ENCODE measurements at regions of chr7 and their contacts with region 1.

Region 1: DNA sequence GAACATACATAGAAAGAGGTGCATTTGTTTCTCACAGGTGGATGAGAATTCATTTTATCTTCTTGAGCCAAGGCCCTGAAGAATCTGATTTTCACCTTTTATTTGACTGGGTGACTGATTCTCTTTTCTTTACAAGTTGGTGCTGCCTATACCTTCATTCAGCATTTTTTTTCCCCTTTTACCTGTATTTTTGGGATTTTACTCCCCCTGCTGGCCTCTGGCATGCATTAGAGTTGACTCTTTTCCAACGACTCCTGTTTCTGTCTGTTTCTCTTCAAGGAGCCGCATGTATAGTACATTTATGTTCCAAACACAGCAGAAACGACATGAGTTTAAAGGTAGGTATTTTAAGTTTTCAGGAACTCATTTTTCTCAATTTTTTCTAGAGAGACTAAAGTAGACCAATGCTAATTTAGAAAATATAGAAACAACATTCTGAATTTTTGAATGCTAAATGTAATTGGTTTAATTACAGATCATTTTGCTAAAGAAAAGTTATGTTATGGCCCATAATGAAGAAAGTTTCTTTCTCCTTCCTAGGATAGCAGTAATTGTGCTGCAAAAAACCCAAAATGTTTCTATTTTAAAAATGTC is 149.8 kb upstream of the HDAC9 start:
- DNase-seq: peak; percentile 81
- ATAC-seq: peak; percentile 82
- H3K4me3 ChIP-seq: no peak overlapping the region
- H3K27ac ChIP-seq: no peak overlapping the region
- H3K4me1 ChIP-seq: no peaks in the 10 kb centered on the region
- H3K27me3 ChIP-seq: no peaks in the 10 kb centered on the region
- CTCF ChIP-seq: peak; percentile 91

Region 2: DNA sequence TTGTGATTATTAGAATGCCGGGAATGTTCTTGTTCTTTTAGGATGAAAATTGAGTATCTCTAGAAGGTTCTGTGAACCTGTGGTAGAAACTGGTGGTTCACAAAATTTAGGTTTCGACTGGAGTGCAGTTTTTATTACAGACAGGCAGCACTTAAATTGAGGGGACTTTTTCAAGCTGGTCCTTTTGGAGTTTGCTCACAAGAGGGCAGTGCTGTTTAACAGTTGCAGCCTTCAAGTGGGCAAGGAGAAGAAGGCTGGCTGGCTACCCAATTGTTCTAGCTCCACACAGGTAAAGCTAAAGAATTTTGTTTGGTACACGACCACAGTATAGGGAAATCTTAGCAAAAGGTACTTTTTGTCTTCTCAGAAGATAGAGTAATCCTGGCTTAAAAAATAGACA is 639.0 kb before region 1 on chr7:
- CTCF ChIA-PET with region 1: interaction called, 20 read pairs
- POLR2A ChIA-PET with region 1: no interaction called
- intact Hi-C with region 1: loop called (anchors 1 kb)
- DNase-seq: peak; percentile 77
- ATAC-seq: peak; percentile 97
- H3K4me3 ChIP-seq: no peak overlapping the region
- H3K27ac ChIP-seq: no peak overlapping the region
- H3K4me1 ChIP-seq: no peaks in the 10 kb centered on the region; the same call in 1 of the 2 replicates
- H3K27me3 ChIP-seq: no peaks in the 10 kb centered on the region
- CTCF ChIP-seq: peak; percentile 86

Region 3: GRCh38 chr7:17781491-17782215 is 564.1 kb before region 1 on chr7:
- CTCF ChIA-PET with region 1: interaction called, 11 read pairs
- POLR2A ChIA-PET with region 1: no interaction called
- intact Hi-C with region 1: no loop called
- DNase-seq: peak; percentile 71
- ATAC-seq: peak; percentile 73
- H3K4me3 ChIP-seq: no peak overlapping the region
- H3K27ac ChIP-seq: peak overlapping the region; percentile 67
- H3K4me1 ChIP-seq: peaks cover 19% of the 10 kb centered on the region
- H3K27me3 ChIP-seq: no peaks in the 10 kb centered on the region
- CTCF ChIP-seq: no peak

Region 4: DNA sequence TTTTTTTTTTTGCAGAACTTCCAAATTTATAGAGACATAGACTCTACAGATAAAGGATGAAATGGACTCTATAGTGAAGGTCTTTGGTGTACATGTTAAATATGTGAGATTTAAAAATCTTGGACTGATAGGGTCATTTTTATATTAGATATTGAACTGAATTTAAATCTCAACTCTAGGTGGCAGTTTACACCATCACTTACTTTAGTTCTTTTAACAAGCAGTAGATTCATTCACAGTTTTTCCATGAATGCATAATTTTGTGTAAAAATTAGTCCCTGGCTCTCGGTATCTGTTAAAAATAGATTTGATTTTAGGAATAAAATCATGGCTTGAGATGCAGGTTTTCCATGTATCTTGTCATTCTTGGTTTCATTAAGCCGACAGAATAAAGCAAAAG is 374.3 kb before region 1 on chr7:
- CTCF ChIA-PET with region 1: no interaction called
- POLR2A ChIA-PET with region 1: no interaction called
- intact Hi-C with region 1: loop called (anchors 1 kb)
- DNase-seq: peak; percentile 41
- ATAC-seq: no peak
- H3K4me3 ChIP-seq: no peak overlapping the region
- H3K27ac ChIP-seq: no peak overlapping the region
- H3K4me1 ChIP-seq: peaks cover 13% of the 10 kb centered on the region
- H3K27me3 ChIP-seq: no peaks in the 10 kb centered on the region
- CTCF ChIP-seq: peak; percentile 57

Region 5: GRCh38 chr7:18086165-18087030 is 259.3 kb before region 1 on chr7:
- CTCF ChIA-PET with region 1: no interaction called
- POLR2A ChIA-PET with region 1: no interaction called
- intact Hi-C with region 1: loop called (anchors 2 kb)
- DNase-seq: peak; percentile 36
- ATAC-seq: peak; percentile 68
- H3K4me3 ChIP-seq: peak overlapping the region; percentile 95
- H3K27ac ChIP-seq: no peak overlapping the region
- H3K4me1 ChIP-seq: no peaks in the 10 kb centered on the region; the same call in 1 of the 2 replicates
- H3K27me3 ChIP-seq: no peaks in the 10 kb centered on the region
- CTCF ChIP-seq: no peak; the same call in 1 of the 2 replicates

Region 6: GRCh38 chr7:18177815-18178660 is 167.7 kb before region 1 on chr7:
- CTCF ChIA-PET with region 1: no interaction called
- POLR2A ChIA-PET with region 1: no interaction called
- intact Hi-C with region 1: loop called (anchors 2 kb)
- DNase-seq: peak; percentile 95
- ATAC-seq: peak; percentile 82
- H3K4me3 ChIP-seq: peak overlapping the region; percentile 56
- H3K27ac ChIP-seq: peak overlapping the region; percentile 99
- H3K4me1 ChIP-seq: peaks cover 54% of the 10 kb centered on the region
- H3K27me3 ChIP-seq: no peaks in the 10 kb centered on the region
- CTCF ChIP-seq: no peak